ENCODE measurements at regions of chr22 and their contacts with region 1.

Region 1: GRCh38 chr22:40346178-40347118 is at the start of gene ADSL:
- DNase-seq: peak; percentile 87 to 92 (median 91)
- H3K4me3 ChIP-seq: peak within 1 kb of the TSS; percentile 62 to 95 (median 84)
- H3K27ac ChIP-seq: peak within 1 kb of the TSS; percentile 77 to 94 (median 84)
- H3K4me1 ChIP-seq: peaks cover 22 to 23% of the 10 kb centered on the region in 2 donors
- H3K27me3 ChIP-seq: no peaks in the 10 kb centered on the region
- CTCF ChIP-seq: peak in 2 of 6 experiments; percentile 6 to 30
- POLR2A ChIP-seq: peak; percentile 87
- total RNA-seq, gene ADSL: 26.8 to 107 (median 60.4) TPM

Region 2: GRCh38 chr22:39532215-39533071 is 814.0 kb before region 1 on chr22 and contains the start of gene RPS19BP1:
- intact Hi-C with region 1: loop called in 1 of 2 experiments (anchors 10 kb)
- DNase-seq: peak; percentile 99 to 100 (median 100)
- H3K4me3 ChIP-seq: peak within 1 kb of the TSS; percentile 51 to 78 (median 64)
- H3K27ac ChIP-seq: peak within 1 kb of the TSS; percentile 49 to 91 (median 87)
- H3K4me1 ChIP-seq: peaks cover 18 to 54% of the 10 kb centered on the region in 2 donors
- H3K27me3 ChIP-seq: no peaks in the 10 kb centered on the region
- CTCF ChIP-seq: peak in 1 of 6 experiments; percentile 23
- POLR2A ChIP-seq: peak; percentile 58 to 86
- total RNA-seq, gene RPS19BP1: 80.4 to 250 (median 139) TPM

Region 3: DNA sequence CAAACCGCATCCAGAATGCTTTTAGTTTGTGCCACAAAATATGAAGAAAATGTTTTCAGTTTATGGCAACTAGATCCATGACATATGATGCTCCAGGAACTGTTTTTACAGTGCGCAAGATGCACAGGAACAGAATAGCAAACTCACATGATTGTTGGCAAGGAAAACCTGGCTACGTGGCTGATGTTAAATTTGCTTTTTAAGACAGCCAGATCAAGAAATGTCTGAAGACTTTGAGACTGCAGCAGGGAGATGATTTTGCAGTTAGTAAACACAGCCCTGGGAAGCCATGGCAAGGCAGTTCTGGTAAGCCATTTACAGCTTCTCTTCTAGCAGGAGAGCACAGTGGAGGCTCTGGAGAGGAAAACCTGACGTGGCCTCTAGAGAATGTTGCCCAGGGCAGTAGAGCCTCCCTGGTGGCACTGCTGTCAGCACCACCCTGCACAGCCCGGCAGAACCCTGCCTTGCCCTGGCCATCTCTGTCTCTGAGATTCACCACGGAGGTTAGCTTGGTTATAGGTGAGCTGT is 238.5 kb before region 1 on chr22:
- intact Hi-C with region 1: no loop called
- DNase-seq: peak in 6 of 7 donors; percentile 27 to 74 (median 46)
- H3K4me3 ChIP-seq: peak overlapping the region in 2 of 4 donors; percentile 14 to 46
- H3K27ac ChIP-seq: peak overlapping the region in 4 of 5 donors; percentile 7 to 68 (median 54)
- H3K4me1 ChIP-seq: peaks cover 11 to 32% of the 10 kb centered on the region in 2 donors
- H3K27me3 ChIP-seq: no peaks in the 10 kb centered on the region
- CTCF ChIP-seq: no peak
- POLR2A ChIP-seq: no peak

Measured in adrenal gland (tissue), 19 donors.